ENCODE measurements at regions of chr5 and their contacts with region 1.

Region 1: DNA sequence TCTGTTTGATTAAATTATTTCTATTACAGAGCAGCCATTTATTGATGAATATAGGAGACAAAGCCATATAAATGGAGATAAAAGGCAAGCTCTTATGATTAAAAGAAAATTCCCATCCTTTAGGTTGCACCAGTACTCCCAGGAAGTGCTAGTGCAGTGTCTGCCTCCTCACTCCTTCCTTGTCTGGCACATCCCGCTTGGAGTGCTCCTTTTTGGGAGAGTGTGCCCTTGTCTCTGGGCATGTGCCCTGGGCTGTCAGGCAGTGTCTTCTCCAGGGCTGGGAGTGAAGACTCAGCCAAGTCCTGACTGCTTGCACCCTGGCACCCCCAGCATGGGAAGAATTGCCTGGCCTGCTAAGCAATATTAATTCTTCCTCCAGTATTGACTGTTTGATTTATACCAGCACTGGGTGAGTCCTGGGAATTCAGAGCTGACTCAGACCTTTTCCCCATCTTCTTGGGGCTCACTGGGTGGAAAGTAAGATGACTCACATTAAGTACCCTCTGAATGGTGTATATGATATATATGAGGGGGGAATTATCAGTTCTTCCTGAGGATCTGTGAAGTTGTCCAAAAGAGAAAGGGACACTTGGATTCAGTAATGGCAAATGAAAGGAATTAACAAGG is 62.1 kb downstream of the ZSWIM6 start:
- DNase-seq: no peak
- H3K4me3 ChIP-seq: no peak overlapping the region
- H3K27ac ChIP-seq: no peak overlapping the region
- H3K4me1 ChIP-seq: peaks cover 3% of the 10 kb centered on the region
- H3K27me3 ChIP-seq: no peaks in the 10 kb centered on the region
- CTCF ChIP-seq: no peak

Region 2: DNA sequence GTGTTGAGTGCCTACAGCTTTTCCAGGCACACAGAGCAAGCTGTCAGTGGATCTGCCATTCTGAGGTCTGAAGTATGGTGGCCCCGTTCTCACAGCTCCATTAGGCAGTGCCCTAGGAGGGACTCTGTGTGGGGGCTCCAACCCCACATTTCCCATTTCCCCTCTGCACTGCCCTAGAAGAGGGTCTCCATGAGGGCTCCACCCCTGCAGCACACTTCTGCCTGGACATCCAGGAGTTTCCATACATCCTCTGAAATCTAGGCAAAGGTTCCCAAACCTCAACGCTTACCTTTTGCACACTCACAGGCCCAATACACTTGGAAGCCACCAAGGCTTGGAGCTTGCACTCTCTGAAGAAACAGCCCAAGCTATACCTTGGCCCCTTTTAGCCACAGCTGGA is 825.5 kb before region 1 on chr5:
- CTCF ChIA-PET with region 1: no interaction called
- dilution Hi-C with region 1: no loop called
- in situ Hi-C with region 1: no loop called
- intact Hi-C with region 1: no loop called
- DNase-seq: no peak
- H3K4me3 ChIP-seq: no peak overlapping the region
- H3K27ac ChIP-seq: no peak overlapping the region
- H3K4me1 ChIP-seq: no peaks in the 10 kb centered on the region
- H3K27me3 ChIP-seq: no peaks in the 10 kb centered on the region
- CTCF ChIP-seq: no peak

Region 3: DNA sequence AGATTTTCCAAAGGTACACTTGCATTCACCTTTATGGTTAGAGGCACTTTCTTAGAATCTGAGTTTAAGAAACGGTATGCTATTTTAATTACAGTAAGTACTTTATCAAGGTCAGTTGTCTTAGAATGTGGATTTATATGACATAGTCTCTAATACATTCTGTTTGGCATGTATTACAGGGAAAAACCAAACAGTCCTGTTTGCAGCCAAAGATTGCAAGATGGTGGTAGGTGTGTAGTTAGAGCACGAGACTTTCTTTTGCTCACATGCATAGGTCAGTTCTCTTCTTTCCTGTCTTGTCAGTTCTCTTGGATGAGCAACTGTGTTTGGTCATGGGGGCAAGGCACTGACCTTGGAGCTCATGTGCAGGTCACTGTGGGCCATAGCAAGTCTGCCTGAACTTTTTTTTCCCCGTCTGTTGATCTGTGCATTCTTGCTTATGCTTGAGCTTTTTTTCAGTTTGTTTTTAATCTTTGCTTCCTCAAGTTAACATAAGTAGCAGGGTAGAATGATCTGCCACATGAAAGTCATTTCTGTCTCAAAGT is 41.5 kb before region 1 on chr5:
- CTCF ChIA-PET with region 1: no interaction called
- dilution Hi-C with region 1: no loop called
- in situ Hi-C with region 1: no loop called
- intact Hi-C with region 1: loop called (anchors 5 kb)
- DNase-seq: no peak
- H3K4me3 ChIP-seq: no peak overlapping the region
- H3K27ac ChIP-seq: no peak overlapping the region
- H3K4me1 ChIP-seq: no peaks in the 10 kb centered on the region
- H3K27me3 ChIP-seq: no peaks in the 10 kb centered on the region
- CTCF ChIP-seq: no peak